WTC11 (cell line): ENCODE measurements at regions of chr16 and their contacts with region 1.

Region 1: DNA sequence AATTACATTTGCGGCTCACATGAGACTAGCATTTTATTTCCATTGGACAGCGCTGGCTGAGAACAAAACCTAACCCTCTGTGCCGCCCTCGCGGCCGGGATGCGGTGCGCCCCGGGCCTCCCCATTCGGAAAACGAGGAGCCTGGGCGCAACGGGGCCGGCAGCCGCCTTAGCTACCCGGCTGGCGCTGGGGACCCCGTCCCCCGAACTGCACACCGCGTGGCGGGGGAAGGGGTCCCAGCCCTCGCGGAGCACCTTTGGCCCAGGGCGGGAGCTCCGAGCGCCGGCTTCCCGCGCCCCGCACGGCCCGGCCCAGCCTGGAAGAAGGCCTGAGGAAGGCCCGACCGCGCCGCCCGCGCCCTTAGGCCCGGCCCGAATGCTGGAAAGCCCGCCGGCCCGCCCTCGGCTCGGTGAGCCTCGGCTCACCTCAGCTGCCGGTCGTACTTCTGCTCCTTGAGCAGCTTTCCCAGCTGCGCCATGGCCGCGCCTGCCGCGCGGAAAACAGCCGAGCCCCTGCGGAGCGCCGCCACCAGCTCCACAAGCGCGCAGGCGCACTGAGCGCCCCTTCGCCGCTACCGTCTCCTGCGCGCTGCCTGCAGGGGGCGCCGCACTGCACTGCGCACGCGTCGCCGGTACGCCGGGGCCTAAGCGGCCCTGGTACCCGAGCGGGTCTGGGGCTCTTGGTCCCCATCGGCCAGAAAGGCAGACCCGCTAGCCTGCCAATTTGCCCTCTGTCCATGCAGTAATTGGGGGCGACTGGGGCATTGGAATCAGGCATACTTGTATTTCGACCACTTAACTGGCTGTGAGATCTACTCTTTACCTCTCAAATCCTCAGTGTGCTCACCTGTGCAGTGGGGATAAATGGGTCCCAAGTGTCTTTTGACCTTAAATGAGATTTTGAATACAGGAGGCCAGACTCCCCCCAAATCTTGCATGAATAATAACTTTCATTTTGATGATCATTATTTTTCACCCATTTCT is at the start of gene NAE1:
- DNase-seq: peak; percentile 90
- ATAC-seq: peak; percentile 96
- H3K4me3 Mint-ChIP-seq: peak within 1 kb of the TSS; percentile 67
- H3K27ac Mint-ChIP-seq: no peak within 1 kb of the TSS
- H3K4me1 Mint-ChIP-seq: peaks cover 20% of the 10 kb centered on the region
- H3K27me3 Mint-ChIP-seq: peaks cover 14% of the 10 kb centered on the region
- CTCF ChIP-seq: peak; percentile 87
- total RNA-seq, gene NAE1: 103 to 129 TPM (median 107 TPM) in 3 replicates

Region 2: DNA sequence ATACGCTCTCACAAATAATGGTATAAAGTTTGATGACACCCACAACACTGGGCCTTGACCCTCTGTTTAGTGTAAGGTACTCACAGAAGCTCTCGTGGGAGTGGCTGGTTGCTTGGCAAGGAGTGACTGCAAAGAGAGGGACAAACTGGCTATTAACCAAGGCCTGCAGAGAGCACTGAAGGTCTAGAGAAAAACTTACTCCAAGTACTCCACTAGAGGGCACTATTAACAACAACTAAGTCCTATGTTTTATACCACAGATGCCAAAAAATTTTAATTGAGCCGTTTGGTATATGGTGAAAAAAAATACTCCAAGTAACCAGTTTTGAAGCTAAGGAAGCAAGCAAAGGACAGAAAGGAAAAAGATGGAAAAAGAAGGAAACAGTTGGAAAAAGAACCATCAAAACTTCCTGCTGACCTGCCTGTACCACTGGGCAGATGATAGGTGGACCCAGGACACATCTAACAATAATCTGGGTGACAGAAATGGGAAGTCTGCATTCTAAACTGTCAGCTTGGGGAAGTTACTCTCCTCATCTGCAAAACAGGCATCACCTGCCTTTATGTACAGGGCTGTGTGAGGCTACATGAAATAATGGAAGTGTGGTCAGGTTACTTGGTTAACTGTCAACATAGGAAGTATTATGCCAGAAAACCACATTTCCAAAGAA is 102.5 kb before region 1 on chr16:
- CTCF ChIA-PET with region 1: interaction called, 10 read pairs
- POLR2A ChIA-PET with region 1: no interaction called
- DNase-seq: no peak
- ATAC-seq: peak; percentile 58
- H3K4me3 Mint-ChIP-seq: no peak overlapping the region
- H3K27ac Mint-ChIP-seq: peak overlapping the region; percentile 97
- H3K4me1 Mint-ChIP-seq: peaks cover 36% of the 10 kb centered on the region
- H3K27me3 Mint-ChIP-seq: no peaks in the 10 kb centered on the region
- CTCF ChIP-seq: peak; percentile 19; the same call in 1 of the 2 replicates

Region 3: DNA sequence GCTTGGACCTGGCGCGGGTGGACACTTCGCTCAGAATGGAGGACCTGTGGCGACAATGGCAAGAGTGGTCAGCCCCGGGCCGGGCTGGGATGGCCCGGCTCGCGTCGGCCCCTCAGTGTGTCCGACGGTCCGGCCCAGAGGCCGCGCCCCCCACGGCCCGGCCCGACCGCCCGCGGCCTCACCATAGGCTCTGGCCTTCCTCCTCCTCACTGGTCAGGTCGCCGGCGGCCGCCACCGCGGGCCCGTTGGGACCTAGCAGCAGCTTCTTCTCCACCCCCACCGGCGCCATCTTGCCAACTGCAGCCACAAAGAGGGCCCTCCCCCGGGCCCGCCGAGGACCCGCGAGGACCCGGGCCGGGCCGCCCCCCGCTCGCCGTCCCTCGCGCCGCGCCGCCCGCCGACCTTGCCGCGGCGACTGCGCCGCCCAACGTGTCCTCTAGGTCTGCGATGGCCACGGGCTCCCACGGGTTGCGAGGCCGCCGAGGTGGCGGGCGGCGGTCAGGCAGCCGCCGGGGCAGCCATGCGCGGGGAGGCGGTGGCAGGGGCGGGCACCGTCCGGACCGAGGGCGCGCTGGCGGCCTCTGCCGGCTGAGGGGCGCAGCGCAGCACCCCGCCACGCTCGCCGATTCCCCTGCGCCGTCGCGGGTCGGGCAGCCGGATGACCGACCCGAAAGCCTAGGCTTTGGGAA is 79.3 kb before region 1 on chr16 and contains the start of gene DYNC1LI2:
- CTCF ChIA-PET with region 1: interaction called, 18 read pairs
- POLR2A ChIA-PET with region 1: no interaction called
- DNase-seq: peak; percentile 77
- ATAC-seq: peak; percentile 94
- H3K4me3 Mint-ChIP-seq: peak within 1 kb of the TSS; percentile 87
- H3K27ac Mint-ChIP-seq: peak within 1 kb of the TSS; percentile 81
- H3K4me1 Mint-ChIP-seq: peaks cover 25% of the 10 kb centered on the region
- H3K27me3 Mint-ChIP-seq: peaks cover 21% of the 10 kb centered on the region
- CTCF ChIP-seq: peak; percentile 74
- total RNA-seq, gene DYNC1LI2: 82.7 to 89.8 TPM (median 89.7 TPM) in 3 replicates

Region 4: GRCh38 chr16:66850115-66850815 is 19.6 kb after region 1 on chr16:
- CTCF ChIA-PET with region 1: interaction called, 76 read pairs
- POLR2A ChIA-PET with region 1: no interaction called
- DNase-seq: no peak
- ATAC-seq: no peak
- H3K4me3 Mint-ChIP-seq: no peak overlapping the region
- H3K27ac Mint-ChIP-seq: no peak overlapping the region
- H3K4me1 Mint-ChIP-seq: peaks cover 9% of the 10 kb centered on the region
- H3K27me3 Mint-ChIP-seq: peaks cover 33% of the 10 kb centered on the region
- CTCF ChIP-seq: no peak

Region 5: GRCh38 chr16:66880288-66881013 is 49.7 kb after region 1 on chr16 and contains the start of gene PDP2:
- CTCF ChIA-PET with region 1: interaction called, 31 read pairs
- POLR2A ChIA-PET with region 1: interaction called, 5 read pairs
- DNase-seq: peak; percentile 97
- ATAC-seq: peak; percentile 99
- H3K4me3 Mint-ChIP-seq: peak within 1 kb of the TSS; percentile 95
- H3K27ac Mint-ChIP-seq: peak within 1 kb of the TSS; percentile 93
- H3K4me1 Mint-ChIP-seq: peaks cover 9% of the 10 kb centered on the region
- H3K27me3 Mint-ChIP-seq: peaks cover 11% of the 10 kb centered on the region
- CTCF ChIP-seq: no peak
- total RNA-seq, gene PDP2: 26.4 to 28.4 TPM (median 27.0 TPM) in 3 replicates

Region 6: GRCh38 chr16:66924527-66925321 is 94.0 kb after region 1 on chr16:
- CTCF ChIA-PET with region 1: interaction called, 15 read pairs
- POLR2A ChIA-PET with region 1: interaction called, 3 read pairs
- DNase-seq: peak; percentile 74
- ATAC-seq: peak; percentile 85
- H3K4me3 Mint-ChIP-seq: peak overlapping the region; percentile 73
- H3K27ac Mint-ChIP-seq: no peak overlapping the region
- H3K4me1 Mint-ChIP-seq: peaks cover 7% of the 10 kb centered on the region; the same call in 1 of the 2 replicates
- H3K27me3 Mint-ChIP-seq: peaks cover 59% of the 10 kb centered on the region
- CTCF ChIP-seq: no peak